Right ventricle myocardium inferior (tissue), 1 donor: ENCODE measurements at regions of chr10 and their contacts with region 1.

Region 1: DNA sequence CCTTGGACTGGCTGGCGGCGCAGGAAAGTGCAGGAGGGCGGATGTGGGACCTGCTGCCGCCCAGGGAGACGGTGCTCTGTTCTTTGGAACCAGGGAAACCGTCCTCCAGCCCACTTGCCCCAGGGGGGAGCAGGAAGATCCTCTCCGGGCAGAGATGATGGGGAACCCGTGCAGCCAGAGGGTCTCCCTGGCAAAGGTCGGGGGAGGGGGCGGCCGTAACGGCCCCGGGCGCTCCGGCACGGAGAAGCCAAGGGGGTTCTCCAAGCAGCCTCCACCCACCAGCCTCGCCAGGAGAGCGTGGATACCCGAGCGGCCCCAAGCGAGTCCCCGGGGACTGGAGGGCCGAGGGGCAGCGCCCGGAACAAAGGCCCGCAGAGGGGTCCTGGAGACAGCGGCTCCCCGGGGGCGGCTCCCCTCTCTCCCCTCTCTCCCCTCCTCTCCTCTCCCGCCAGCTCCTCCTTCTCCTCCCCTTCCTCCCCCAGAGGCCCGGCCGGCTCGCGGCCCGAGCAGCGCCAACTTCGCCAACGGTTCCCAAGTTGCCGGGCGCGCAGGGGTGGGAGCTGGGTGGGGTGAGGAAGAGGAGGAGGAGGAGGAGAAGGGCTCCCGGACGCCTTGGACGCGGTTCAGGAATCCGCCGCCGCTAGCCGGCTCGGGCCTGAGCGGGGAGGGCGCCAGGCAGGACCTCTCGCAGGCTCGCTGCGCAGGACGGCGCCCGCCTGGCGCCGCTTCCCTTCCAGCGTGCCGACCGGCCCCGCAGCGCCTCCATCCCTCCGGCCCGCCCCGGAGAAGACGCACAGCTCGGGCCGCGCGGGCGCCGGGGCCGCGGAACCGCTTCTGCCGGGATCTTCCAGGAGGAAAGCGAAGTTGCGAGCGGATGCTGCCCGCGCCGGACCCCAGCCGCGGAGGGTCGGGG is at the start of gene CHST3:
- DNase-seq: peak; percentile 88
- ATAC-seq: peak; percentile 81
- total RNA-seq, gene CHST3: 18.1 TPM

Region 2: GRCh38 chr10:71696628-71697326 is 267.2 kb before region 1 on chr10:
- intact Hi-C with region 1: no loop called
- DNase-seq: peak; percentile 82
- ATAC-seq: peak; percentile 54

Region 3: GRCh38 chr10:71985542-71986250 is 21.7 kb after region 1 on chr10:
- intact Hi-C with region 1: loop called (anchors 2 kb)
- DNase-seq: peak; percentile 86
- ATAC-seq: peak; percentile 69

Region 4: DNA sequence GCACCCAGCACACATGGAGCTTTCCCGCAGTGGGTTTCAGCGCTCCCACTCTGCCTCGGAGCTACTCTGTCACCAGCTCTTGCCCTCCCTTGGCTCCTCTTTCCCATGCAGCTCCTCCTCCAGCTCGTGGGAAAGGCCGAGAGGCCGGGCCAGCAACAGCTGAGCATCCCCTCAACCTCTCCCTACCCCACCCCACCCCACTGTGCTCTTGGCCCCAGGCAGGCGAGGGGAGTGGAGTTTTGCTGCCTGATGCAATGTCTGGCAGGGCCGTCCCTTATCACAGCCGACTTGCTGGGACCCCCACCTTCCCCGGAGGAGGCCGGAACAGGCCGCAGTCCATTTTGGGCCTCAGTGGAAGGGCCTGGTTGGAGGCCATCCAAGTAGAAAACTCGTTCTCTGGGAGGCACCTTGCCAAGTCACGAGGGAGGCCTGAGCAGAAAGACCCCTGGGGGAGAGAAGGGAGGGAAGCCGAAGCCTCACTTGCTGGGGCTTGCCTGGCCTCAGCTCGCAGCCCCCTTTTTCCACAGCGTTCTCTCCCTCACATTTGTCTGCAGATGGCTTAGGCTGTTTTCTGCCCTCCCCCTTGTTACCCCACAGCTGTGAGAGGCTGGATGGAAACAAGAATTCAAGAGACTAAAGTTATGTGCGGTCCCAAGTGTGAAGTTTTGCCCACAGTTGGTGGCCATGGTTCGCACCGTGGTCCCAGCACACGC is 35.5 kb after region 1 on chr10:
- intact Hi-C with region 1: loop called (anchors 5 kb)
- DNase-seq: peak; percentile 91
- ATAC-seq: peak; percentile 89

Region 5: DNA sequence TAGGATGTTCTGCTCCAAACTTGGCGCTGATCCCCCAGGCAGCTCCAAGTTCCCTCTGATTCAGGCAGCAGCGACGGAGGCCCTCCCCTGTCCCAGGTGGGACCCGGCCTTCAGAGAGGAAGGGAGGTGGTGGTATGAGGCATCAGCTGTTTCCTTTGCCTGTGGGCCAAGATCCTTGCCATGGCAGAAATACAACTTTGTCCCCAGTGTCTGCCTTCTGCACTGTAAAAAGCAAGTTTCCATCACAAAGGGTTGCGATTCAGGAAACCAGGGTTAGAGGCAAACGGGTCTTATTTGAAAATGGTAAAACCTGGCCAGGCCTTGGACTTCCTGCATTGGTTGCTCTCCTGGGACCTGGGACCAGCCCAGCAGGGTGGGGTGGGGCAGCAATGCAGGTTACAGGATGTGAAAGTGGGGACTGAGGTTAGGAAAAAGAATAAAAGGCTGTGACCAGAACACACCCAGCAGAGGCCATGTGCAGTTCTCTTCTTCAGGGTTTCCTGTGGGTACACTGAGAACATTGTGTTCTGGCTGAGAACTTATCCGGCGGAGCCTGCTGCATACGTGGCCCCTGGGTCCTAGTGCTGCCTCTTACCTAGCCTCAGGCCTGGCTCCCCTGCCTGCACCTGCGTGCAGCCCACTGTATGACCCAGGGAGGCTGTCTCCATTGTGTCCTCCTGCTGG is 284.6 kb after region 1 on chr10:
- intact Hi-C with region 1: loop called (anchors 10 kb)
- DNase-seq: peak; percentile 89
- ATAC-seq: peak; percentile 85

Region 6: GRCh38 chr10:72334825-72335393 is 370.9 kb after region 1 on chr10:
- intact Hi-C with region 1: loop called (anchors 5 kb)
- DNase-seq: peak; percentile 94
- ATAC-seq: peak; percentile 46

Region 7: DNA sequence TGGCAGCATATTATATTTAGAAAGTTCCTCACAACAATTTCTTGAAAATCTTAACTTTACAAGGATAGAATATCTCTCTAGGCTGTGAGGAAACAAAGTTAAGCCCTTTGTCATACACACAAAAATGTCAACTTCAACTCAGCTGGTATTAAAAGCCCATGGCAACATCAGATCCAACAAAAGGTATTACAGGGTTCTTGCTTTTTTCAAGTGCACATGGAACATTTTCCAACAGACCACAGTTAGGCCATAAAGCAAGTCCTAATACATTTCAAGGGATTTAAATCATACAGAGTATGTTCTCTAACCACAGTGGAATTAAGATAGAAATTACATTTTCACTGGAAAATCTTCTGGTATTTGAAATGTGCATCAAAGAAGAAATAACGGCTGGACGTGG is 857.6 kb after region 1 on chr10:
- intact Hi-C with region 1: no loop called
- DNase-seq: no peak
- ATAC-seq: no peak